Dendritic cell treated with granulocyte-macrophage colony-stimulating factor and Interleukin-4, amounts not matched to agents 40 ng/mL and 50 ng/mL, for 4 days (primary cell): ENCODE measurements at regions of chr2 and their contacts with region 1.

Region 1: GRCh38 chr2:68121873-68122679 is 35.6 kb upstream of the PNO1 start:
- H3K4me3 Mint-ChIP-seq: peak overlapping the region; percentile 23
- H3K27ac Mint-ChIP-seq: peak overlapping the region; percentile 23
- H3K4me1 Mint-ChIP-seq: peaks cover 12% of the 10 kb centered on the region
- H3K27me3 Mint-ChIP-seq: no peaks in the 10 kb centered on the region

Region 2: GRCh38 chr2:68185541-68186164 is 63.6 kb after region 1 on chr2:
- intact Hi-C with region 1: loop called (anchors 1 kb)
- H3K4me3 Mint-ChIP-seq: no peak overlapping the region
- H3K27ac Mint-ChIP-seq: no peak overlapping the region
- H3K4me1 Mint-ChIP-seq: peaks cover 4% of the 10 kb centered on the region
- H3K27me3 Mint-ChIP-seq: no peaks in the 10 kb centered on the region

Region 3: GRCh38 chr2:68282811-68283418 is 160.8 kb after region 1 on chr2:
- intact Hi-C with region 1: loop called (anchors 2 kb)
- H3K4me3 Mint-ChIP-seq: no peak overlapping the region
- H3K27ac Mint-ChIP-seq: peak overlapping the region; percentile 11
- H3K4me1 Mint-ChIP-seq: peaks cover 18% of the 10 kb centered on the region
- H3K27me3 Mint-ChIP-seq: no peaks in the 10 kb centered on the region

Region 4: DNA sequence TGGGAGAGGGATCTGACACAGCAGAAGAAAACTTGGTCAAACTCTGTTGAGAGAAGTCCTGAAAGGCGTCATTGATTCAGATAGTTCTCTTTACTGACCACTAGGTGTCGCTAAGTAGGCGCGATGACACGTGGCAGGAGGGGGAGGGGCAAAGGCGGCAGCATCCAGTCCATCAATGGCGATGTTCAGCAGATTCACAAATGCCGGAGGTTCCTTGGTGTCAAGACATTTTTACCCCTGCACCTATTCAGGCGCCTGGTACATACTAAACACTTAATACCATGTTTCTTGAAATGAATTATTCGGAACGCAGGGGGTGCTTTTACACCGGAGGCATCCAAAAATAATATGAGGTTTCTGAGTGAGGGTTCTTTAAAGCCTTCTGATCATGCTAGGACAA is 240.0 kb after region 1 on chr2:
- intact Hi-C with region 1: loop called (anchors 5 kb)
- H3K4me3 Mint-ChIP-seq: peak overlapping the region; percentile 55
- H3K27ac Mint-ChIP-seq: peak overlapping the region; percentile 99
- H3K4me1 Mint-ChIP-seq: peaks cover 35% of the 10 kb centered on the region
- H3K27me3 Mint-ChIP-seq: no peaks in the 10 kb centered on the region